PC-3 (cell line): ENCODE measurements at regions of chr16 and their contacts with region 1.

Region 1: DNA sequence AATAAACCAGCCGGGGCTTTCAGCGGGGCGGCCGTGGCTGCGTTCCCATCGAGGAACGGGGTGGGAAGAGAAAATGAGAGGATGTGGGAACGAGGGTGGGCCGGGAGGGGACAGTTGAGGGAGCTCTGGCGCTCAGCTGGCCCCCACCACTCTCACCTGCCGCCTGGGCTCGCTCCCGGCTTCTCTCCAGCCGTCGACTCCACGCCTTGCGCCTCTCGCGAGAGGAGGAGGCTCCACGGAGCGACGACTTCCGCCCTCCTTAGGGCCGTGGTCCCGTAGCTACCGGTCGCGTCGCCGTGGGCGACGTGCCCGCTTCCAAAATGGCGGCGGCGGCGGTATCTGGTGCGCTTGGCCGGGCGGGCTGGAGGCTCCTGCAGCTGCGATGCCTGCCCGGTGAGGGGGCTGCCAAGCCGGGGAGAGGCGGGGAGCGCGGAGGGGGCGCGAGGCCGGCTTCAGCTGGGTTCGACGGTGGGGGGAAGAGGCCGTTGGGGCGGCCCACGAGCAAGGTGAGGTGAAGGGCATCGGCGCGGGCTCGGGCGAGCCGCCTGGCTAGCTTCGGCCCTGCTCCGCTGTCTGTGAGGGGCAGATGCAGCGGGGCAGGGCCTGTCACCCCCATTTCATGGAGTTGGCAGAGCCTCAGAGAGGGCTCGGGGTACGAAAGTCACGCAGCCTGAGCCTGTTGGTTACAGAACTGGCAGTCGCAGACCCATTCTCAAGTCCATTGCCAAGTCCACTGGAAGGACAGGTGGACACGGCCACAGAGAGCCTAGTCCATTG is at the starts of genes CIAPIN1 and COQ9:
- DNase-seq: peak; percentile 91
- ATAC-seq: peak; percentile 99
- H3K4me3 ChIP-seq: peak within 1 kb of the TSS; percentile 98
- H3K27ac ChIP-seq: peak within 1 kb of the TSS; percentile 55
- H3K4me1 ChIP-seq: peaks cover 12% of the 10 kb centered on the region
- H3K27me3 ChIP-seq: no peaks in the 10 kb centered on the region
- CTCF ChIP-seq: no peak
- total RNA-seq, gene CIAPIN1: 35.6 and 48.6 TPM in 2 replicates
- total RNA-seq, gene COQ9: 67.0 and 67.4 TPM in 2 replicates

Region 2: DNA sequence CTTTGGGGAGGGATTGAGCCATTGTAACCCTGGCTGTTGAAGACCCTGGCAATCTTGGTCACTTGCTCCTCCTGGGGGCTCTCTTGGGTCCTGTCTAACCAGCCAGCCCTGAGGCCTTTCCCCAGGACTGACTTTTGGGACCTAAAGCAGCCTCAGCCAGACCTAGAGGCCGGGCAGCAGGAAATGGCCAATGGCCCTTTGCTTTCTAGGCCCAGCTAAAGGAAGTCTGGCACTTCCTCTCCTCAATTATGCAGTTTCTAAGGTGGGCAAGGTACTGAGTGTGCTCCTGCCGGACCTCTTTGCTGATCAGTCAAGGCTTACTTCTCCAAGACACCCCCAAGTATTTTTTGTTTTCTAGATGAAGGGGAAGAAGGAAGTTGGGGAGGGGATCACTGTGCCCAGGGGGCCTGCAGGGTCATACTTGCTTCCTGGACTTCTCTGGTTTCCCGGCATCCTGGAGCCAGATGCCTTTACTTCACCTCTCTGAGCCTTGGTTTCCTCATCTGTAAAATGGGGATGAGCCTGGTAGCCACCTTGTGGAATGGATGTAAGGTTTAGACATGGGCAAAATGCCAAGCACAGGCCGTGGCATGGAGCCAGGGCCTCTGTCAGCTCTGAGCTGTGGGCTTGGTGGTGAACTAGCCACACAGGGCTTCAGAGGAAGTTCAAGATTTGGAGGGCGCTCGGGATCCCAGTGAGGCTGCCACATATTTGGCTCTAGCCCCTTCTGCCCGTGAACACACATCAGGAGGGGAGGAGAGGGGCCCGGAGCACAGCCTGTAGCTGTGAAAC is 66.5 kb before region 1 on chr16:
- CTCF ChIA-PET with region 1: no interaction called
- POLR2A ChIA-PET with region 1: no interaction called
- intact Hi-C with region 1: no loop called
- DNase-seq: peak; percentile 52
- ATAC-seq: no peak
- H3K4me3 ChIP-seq: no peak overlapping the region
- H3K27ac ChIP-seq: no peak overlapping the region
- H3K4me1 ChIP-seq: peaks cover 24% of the 10 kb centered on the region
- H3K27me3 ChIP-seq: no peaks in the 10 kb centered on the region
- CTCF ChIP-seq: no peak

Region 3: GRCh38 chr16:57422026-57422944 is 25.1 kb before region 1 on chr16:
- CTCF ChIA-PET with region 1: interaction called, 17 read pairs
- POLR2A ChIA-PET with region 1: no interaction called
- intact Hi-C with region 1: no loop called
- DNase-seq: peak; percentile 69
- ATAC-seq: peak; percentile 55
- H3K4me3 ChIP-seq: no peak overlapping the region
- H3K27ac ChIP-seq: no peak overlapping the region
- H3K4me1 ChIP-seq: peaks cover 5% of the 10 kb centered on the region
- H3K27me3 ChIP-seq: no peaks in the 10 kb centered on the region
- CTCF ChIP-seq: peak; percentile 79

Region 4: DNA sequence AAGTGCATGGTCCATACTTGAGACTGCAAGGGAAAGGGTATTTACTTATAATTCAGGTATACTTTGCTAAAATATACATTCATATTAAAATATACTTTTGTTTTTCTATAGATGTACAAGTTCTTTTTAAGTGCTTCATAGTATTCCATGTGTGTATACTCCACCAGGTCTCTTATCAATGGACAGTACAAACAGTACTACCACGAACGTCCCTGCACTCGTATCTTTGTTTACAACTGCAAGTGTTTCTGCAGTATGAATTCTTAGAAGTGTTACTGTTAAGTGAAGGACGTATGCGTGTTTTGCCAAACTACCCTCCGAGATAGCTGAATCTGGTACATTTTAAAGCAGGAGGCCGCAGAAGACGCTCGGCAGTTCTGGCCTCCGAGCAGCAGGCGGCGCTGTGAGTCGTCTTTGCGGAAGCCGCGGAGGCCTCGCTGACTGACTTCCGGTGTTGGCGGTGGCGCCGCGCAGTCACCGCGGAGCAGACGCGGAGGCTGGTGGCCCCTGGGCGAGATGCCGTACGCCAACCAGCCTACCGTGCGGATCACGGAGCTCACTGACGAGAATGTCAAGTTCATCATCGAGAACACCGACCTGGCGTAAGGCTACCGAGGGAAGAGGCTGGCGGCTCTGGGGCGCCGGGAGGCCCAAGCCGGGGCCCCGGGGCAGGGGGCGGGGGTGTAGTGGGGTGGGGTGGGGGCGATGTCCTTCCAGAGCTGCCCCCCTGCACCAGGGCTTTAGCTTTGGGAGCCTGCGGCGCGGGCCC is 15.0 kb after region 1 on chr16 and contains the start of gene POLR2C:
- CTCF ChIA-PET with region 1: no interaction called
- POLR2A ChIA-PET with region 1: interaction called, 3 read pairs
- intact Hi-C with region 1: loop called (anchors 2 kb)
- DNase-seq: peak; percentile 77
- ATAC-seq: peak; percentile 92
- H3K4me3 ChIP-seq: peak within 1 kb of the TSS; percentile 97
- H3K27ac ChIP-seq: no peak within 1 kb of the TSS
- H3K4me1 ChIP-seq: no peaks in the 10 kb centered on the region
- H3K27me3 ChIP-seq: no peaks in the 10 kb centered on the region
- CTCF ChIP-seq: peak; percentile 77
- total RNA-seq, gene POLR2C: 83.2 and 114 TPM in 2 replicates

Region 5: DNA sequence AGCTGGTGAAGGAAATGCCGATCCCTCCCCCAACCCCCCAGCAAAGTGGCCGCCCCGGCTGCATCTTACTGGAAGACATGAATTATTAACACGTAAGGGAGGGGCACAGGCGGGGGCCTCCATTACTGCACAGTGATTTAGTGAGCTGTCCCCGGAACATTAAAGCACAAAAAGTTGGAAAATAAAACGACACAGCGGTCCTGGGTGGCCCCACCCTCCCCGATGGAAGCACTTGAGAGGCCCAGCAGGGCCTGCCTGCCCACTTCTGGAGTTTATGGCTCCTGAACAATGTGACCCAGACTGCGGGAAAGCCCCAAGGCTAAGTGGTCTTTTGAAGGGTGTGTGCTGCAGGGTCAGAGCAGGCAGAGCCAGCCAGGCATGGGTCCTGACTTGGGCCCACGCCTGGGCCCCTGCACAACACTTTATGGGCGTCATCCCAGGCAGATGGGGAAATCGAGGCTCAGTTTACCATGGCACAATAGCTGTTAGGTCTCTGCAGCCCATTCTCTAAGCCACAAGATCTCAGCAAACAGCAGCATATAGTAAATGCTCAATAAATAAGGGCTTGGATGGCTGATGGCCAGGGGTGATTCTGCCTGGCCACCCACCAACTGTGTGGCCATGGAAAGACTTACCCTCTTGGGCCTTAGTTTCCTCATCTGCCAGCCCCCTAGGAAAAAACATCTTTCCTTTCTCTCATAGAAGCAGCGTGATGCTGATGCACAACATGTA is 66.2 kb after region 1 on chr16:
- CTCF ChIA-PET with region 1: no interaction called
- POLR2A ChIA-PET with region 1: no interaction called
- intact Hi-C with region 1: no loop called
- DNase-seq: no peak
- ATAC-seq: no peak
- H3K4me3 ChIP-seq: no peak overlapping the region
- H3K27ac ChIP-seq: no peak overlapping the region
- H3K4me1 ChIP-seq: no peaks in the 10 kb centered on the region
- H3K27me3 ChIP-seq: no peaks in the 10 kb centered on the region
- CTCF ChIP-seq: no peak